Activated CD4-positive, alpha-beta memory T cell treated with anti-CD3 and anti-CD28 coated beads, Interleukin-2, amount 10 ng/mL, durations not matched to agents 7 days and 5 days (primary cell): ENCODE measurements at regions of chr12 and their contacts with region 1.

Region 1: GRCh38 chr12:111396726-111397445 is 8.8 kb upstream of the SH2B3 start:
- DNase-seq: peak; percentile 86
- H3K4me3 Mint-ChIP-seq: no peak overlapping the region
- H3K27ac Mint-ChIP-seq: no peak overlapping the region
- H3K4me1 Mint-ChIP-seq: peaks cover 25% of the 10 kb centered on the region
- H3K27me3 Mint-ChIP-seq: peaks cover 33% of the 10 kb centered on the region

Region 2: DNA sequence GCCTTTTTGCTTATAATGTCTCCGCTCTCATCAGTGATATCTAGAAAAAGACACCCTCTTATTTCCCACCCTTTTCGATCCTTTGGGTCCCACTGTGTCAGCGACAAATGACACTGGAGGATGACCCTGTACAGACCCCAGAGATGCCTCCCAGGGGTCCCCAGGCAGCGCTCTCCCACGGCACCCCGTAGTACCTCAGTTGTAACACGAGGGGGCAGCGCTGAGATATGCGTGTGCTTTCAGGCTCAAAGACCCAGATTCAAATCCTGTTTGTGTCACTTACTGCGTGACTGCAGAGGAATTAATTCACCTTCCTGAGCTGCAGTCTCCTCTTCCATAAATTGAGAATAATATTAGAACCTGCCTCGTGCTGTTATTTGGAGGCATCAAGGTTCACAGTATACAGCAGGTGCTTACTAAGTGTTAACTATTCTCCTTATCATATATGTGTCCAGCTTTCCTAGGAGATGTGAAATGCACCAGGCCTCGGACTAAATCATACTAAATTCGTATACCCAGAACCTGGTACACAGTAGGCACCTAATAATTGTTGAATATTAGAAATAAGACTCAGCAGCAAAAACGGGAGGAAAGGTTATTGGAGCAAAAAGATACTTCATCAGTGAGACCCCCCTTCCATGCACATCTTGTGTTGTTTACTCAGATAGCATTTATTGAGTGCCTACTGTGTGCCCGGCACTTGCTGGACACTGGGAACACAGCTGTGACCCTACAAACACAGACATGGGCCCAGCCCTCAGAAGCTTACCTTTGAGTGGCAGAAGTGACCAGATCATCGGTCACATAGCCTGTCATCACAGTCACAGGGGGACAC is 127.9 kb before region 1 on chr12:
- CTCF ChIA-PET with region 1: no interaction called
- POLR2A ChIA-PET with region 1: no interaction called
- DNase-seq: peak; percentile 21
- H3K4me3 Mint-ChIP-seq: no peak overlapping the region
- H3K27ac Mint-ChIP-seq: no peak overlapping the region
- H3K4me1 Mint-ChIP-seq: peaks cover 8% of the 10 kb centered on the region
- H3K27me3 Mint-ChIP-seq: peaks cover 13% of the 10 kb centered on the region

Region 3: DNA sequence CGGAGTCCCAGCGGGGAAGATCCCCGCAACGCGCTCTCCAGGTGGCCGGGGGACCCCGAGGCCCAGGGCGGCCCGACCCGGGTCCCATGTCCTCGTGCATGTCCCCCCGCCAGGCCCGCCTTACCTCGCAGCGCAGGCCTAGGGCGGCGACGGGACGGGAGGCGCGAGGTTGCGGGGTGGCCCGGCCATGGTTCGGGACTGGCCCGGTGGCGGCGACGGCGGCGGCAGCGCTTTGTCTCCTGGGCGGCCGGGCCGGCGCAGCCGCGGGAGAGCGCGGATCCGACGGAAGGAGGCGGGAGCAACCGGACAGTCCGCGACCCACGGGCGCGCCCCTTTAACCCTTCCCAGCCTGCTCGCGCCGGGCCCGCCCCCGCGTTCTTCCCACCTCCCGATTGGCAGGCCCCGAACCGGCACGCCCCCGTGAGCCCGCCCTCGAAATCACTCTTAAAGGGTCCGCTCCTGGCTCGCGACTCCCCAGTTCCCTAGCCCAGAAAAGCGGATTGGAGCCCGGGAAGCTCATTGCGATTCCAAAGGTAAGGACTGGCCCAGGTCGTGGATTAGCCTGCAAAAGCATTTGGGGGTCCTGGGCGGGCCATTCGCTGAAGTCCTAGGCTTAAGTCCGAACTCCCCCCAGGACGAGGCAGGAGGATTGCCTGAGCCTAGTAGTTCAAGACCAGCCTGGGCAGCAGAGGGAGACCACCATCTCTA is 27.9 kb before region 1 on chr12 and contains the start of gene PHETA1:
- CTCF ChIA-PET with region 1: interaction called, 10 read pairs
- POLR2A ChIA-PET with region 1: no interaction called
- DNase-seq: peak; percentile 80
- H3K4me3 Mint-ChIP-seq: peak within 1 kb of the TSS; percentile 75
- H3K27ac Mint-ChIP-seq: no peak within 1 kb of the TSS
- H3K4me1 Mint-ChIP-seq: peaks cover 10% of the 10 kb centered on the region
- H3K27me3 Mint-ChIP-seq: peaks cover 12% of the 10 kb centered on the region
- total RNA-seq, gene PHETA1: 0.93 to 0.98 TPM

Region 4: GRCh38 chr12:111412007-111412829 is 15.3 kb after region 1 on chr12:
- CTCF ChIA-PET with region 1: interaction called, 11 read pairs
- POLR2A ChIA-PET with region 1: no interaction called
- DNase-seq: no peak
- H3K4me3 Mint-ChIP-seq: no peak overlapping the region
- H3K27ac Mint-ChIP-seq: peak overlapping the region; percentile 72
- H3K4me1 Mint-ChIP-seq: peaks cover 66% of the 10 kb centered on the region
- H3K27me3 Mint-ChIP-seq: no peaks in the 10 kb centered on the region

Region 5: DNA sequence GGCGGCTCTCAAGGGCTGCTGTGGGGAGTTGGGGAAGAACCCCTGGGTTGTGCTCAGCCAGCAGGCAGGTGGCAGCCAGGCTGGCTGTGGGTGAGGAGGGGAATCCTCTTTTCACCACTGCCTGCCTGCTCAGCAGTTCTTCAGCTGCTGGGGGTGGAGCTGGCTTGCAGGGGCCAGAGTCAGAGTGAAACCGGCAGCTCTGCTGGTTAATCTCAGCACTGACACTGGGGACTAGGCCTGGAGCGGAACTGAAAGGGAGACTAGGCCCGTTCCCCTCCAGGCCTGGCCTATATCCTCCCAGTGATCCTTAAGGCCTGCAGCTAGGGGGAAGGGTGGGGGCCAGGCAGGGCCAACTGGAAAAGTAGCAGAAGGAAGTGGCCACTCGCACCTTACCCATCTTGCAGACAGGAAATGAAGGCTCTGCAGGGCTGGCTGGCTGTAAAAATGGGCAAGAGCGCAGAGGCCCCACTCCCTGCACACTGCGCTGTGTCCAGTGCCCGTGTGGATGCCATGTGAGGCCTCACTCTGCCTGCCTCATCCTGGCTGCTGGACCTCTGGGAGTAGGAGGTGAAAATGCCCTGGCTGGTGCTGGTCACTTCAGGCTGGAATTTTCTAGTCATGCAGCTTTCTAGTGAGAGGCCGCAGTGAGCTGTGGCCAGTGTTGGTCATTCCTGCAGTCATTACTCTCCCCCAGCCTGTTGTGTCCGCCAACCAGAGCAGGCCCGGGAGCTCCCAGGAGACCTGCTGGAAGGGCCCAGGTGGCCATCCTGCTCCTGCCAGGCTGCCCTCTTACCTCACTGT is 48.2 kb after region 1 on chr12:
- CTCF ChIA-PET with region 1: interaction called, 527 read pairs
- POLR2A ChIA-PET with region 1: interaction called, 257 read pairs
- DNase-seq: peak; percentile 93
- H3K4me3 Mint-ChIP-seq: peak overlapping the region; percentile 48
- H3K27ac Mint-ChIP-seq: peak overlapping the region; percentile 84
- H3K4me1 Mint-ChIP-seq: peaks cover 72% of the 10 kb centered on the region
- H3K27me3 Mint-ChIP-seq: peaks cover 1% of the 10 kb centered on the region

Region 6: DNA sequence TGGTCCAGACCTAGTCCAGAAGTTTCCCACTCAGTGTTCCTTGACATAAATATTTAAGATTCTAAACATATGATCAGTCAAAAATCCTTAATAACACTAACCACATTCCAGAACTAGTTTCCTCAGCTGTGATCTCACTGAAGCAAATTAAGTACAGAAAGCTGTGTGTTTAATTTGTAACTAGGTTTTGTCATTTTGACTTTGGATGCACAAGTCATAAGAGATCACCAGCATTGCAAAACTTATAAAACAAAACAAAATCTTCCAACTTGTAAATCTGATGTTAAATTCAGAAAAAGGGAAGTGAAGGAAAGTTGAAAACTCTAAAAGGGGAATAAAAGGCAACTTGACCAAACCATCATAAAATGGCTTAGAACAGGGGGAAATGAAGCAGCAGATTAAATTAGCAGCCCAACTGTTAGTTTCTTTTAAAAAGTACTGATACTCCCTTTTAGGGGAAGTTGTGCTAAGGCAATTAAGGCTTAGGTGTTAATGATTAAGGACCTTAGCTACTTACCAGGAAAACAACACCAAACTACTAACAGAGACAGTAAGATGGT is 65.4 kb after region 1 on chr12:
- CTCF ChIA-PET with region 1: interaction called, 527 read pairs
- POLR2A ChIA-PET with region 1: no interaction called
- DNase-seq: no peak
- H3K4me3 Mint-ChIP-seq: no peak overlapping the region
- H3K27ac Mint-ChIP-seq: no peak overlapping the region
- H3K4me1 Mint-ChIP-seq: peaks cover 4% of the 10 kb centered on the region
- H3K27me3 Mint-ChIP-seq: no peaks in the 10 kb centered on the region

Region 7: DNA sequence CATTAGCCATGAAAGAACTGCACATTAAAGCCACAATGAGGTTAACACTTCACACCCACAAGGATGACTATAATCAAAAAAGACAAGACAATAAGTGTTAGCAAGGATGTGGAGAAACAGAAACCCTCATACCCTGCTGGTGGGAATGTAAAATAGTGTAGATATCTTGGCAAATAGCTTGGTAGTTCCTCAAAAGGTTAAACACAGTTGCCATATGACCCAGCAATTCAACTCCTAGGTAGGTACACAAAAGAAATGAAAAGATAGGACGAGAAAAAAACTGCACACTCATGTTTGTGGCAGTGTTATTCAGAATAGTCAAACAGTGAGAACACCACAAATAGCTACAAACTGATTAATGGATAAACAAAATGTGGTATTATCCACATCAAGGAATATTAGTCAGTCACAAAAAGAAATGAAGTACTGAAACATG is 108.7 kb after region 1 on chr12:
- CTCF ChIA-PET with region 1: interaction called, 12 read pairs
- POLR2A ChIA-PET with region 1: interaction called, 3 read pairs
- DNase-seq: no peak
- H3K4me3 Mint-ChIP-seq: no peak overlapping the region
- H3K27ac Mint-ChIP-seq: peak overlapping the region; percentile 66
- H3K4me1 Mint-ChIP-seq: peaks cover 16% of the 10 kb centered on the region
- H3K27me3 Mint-ChIP-seq: no peaks in the 10 kb centered on the region

Region 8: GRCh38 chr12:111812881-111813741 is 416.2 kb after region 1 on chr12:
- CTCF ChIA-PET with region 1: interaction called, 18 read pairs
- POLR2A ChIA-PET with region 1: no interaction called
- DNase-seq: peak; percentile 70
- H3K4me3 Mint-ChIP-seq: no peak overlapping the region
- H3K27ac Mint-ChIP-seq: no peak overlapping the region
- H3K4me1 Mint-ChIP-seq: peaks cover 11% of the 10 kb centered on the region
- H3K27me3 Mint-ChIP-seq: peaks cover 9% of the 10 kb centered on the region